ENCODE measurements at regions of chr12 and their contacts with region 1.

Region 1: DNA sequence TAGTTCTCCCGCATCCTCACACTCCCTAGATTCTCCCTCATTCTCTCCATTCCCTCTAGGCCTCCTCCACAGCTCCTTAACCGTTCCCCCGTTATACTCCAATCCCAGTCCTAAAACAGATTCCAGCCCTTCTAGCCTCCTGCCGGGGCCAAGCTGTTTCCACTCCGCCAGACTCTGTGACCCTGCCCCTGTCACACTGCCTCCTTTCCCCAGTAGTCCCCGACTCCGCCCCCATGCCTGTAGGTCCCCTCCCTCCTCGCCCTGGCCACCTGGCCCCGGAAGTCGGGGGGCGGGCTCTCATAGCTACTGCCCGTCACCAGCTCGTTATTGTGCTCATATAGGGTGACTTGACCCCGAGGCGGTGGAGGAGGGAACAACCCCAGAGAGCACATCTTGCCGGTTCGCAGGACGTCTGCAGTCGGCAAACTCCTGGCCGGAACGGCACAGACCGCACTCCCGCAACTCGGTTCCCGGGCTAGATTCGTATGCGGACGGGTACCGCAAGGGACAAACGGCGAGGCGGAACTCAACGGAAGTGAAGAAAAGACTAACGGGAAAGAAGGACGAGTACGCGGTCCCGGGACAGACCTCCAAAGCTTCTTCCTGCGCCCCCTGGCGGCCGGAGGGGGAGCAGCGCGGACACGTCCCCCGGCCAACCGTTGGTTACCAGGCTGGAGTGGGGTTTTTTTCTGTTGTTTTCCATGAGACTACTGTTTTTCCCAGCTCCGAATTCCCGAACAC is at the start of gene AAAS:
- DNase-seq: peak; percentile 97
- H3K4me3 ChIP-seq: peak within 1 kb of the TSS; percentile 71
- H3K27ac ChIP-seq: peak within 1 kb of the TSS; percentile 91
- H3K4me1 ChIP-seq: peaks cover 18% of the 10 kb centered on the region
- H3K27me3 ChIP-seq: no peaks in the 10 kb centered on the region
- CTCF ChIP-seq: peak; percentile 100
- total RNA-seq, gene AAAS: 94.2 and 104 TPM in 2 replicates

Region 2: DNA sequence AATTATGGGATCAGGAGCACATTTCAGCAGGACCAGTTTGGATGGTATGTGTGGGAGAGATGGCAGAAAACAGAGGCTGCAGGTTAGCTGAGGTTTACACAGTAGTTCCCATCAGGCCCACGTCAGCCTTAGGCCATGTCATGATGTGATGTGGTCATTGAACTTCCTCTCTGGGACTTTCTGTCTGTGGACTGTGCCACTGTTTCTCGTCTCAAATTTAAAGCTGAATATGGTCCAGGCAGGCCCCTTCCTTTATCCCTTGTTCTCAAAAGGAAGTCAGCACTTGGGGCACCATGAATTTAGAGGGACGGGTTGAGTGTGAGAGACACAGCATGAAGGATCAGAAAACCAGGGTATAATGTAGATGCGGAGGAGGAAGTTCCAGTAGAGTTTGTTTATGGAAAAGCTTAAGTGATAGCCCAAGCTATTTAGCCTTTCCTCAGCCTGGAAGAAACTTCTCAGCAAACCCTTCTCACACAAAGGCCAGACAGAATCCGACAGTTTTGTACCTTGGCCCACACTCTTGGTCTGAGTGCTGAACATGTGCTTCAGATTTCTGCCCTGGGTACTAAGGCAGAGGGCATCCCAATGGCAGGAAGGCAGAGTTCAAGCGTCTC is 227.4 kb before region 1 on chr12:
- CTCF ChIA-PET with region 1: no interaction called
- POLR2A ChIA-PET with region 1: no interaction called
- intact Hi-C with region 1: no loop called
- DNase-seq: no peak
- H3K4me3 ChIP-seq: no peak overlapping the region
- H3K27ac ChIP-seq: no peak overlapping the region
- H3K4me1 ChIP-seq: peaks cover 19% of the 10 kb centered on the region
- H3K27me3 ChIP-seq: no peaks in the 10 kb centered on the region
- CTCF ChIP-seq: no peak

Region 3: DNA sequence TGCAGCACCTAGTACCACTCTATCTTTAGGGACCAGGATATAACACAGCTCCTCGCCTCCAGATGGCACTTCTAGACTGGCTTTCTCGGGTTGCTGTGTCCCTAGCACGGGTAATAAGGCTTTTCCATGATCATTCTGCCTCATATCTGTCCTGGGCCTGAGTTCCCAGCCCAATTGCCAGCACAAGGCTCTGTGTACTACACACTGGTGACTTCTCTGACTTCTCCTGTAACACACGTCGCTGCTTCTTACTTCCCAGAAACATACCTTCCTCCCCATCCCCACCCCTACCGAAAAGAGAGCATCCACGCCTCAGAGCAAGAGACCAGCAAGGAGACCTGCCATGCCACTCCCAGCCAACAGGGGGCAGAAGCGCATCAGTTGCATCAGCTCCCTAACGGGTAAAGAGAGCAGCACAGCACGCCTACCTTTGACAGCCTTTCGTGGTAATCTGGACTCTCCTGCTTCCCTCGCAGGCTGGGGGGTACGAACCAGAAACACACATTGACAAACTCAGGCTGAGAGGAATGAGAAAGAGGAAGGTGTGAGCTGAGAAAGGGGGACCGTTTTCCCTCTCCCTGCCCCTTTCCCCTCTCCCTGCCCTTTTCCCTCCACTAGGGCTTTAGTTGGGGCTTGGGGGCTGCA is 161.9 kb before region 1 on chr12:
- CTCF ChIA-PET with region 1: interaction called, 10 read pairs
- POLR2A ChIA-PET with region 1: no interaction called
- intact Hi-C with region 1: no loop called
- DNase-seq: peak; percentile 89
- H3K4me3 ChIP-seq: no peak overlapping the region
- H3K27ac ChIP-seq: peak overlapping the region; percentile 43
- H3K4me1 ChIP-seq: peaks cover 3% of the 10 kb centered on the region
- H3K27me3 ChIP-seq: no peaks in the 10 kb centered on the region
- CTCF ChIP-seq: peak; percentile 99

Region 4: DNA sequence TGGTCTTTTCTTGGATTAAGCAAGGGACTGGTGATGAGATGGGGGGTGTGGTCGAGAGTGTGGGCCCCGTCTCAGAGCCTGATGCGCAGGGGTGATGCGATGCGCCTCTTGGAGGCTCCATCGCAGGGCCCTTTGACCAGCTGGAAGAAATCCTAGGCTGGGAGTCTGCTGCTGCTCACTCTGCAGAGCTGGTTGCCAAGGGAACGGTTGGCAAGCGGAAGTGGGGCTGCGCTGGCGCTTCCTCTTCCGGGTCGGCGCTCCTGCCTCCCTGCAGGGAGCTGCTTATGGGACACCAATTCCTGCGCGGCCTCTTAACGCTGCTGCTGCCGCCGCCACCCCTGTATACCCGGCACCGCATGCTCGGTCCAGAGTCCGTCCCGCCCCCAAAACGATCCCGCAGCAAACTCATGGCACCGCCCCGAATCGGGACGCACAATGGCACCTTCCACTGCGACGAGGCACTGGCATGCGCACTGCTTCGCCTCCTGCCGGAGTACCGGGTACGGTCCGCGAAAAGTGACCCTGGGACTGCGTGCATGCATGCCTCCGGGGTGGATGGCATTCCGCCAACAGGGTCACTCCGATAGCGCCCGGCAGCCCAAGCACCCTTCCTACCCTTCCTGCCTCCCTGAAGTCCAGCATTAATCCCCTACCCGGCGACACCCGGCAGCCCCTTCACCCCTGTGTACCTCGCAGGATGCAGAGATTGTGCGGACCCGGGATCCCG is 21.6 kb before region 1 on chr12 and contains the start of gene MYG1:
- CTCF ChIA-PET with region 1: interaction called, 11 read pairs
- POLR2A ChIA-PET with region 1: no interaction called
- intact Hi-C with region 1: no loop called
- DNase-seq: peak; percentile 97
- H3K4me3 ChIP-seq: peak within 1 kb of the TSS; percentile 73
- H3K27ac ChIP-seq: peak within 1 kb of the TSS; percentile 78
- H3K4me1 ChIP-seq: peaks cover 13% of the 10 kb centered on the region
- H3K27me3 ChIP-seq: no peaks in the 10 kb centered on the region
- CTCF ChIP-seq: 0 out of 2 replicates have a peak, but pooled peaks have one; percentile 24
- total RNA-seq, gene MYG1: 102 and 111 TPM in 2 replicates

Region 5: DNA sequence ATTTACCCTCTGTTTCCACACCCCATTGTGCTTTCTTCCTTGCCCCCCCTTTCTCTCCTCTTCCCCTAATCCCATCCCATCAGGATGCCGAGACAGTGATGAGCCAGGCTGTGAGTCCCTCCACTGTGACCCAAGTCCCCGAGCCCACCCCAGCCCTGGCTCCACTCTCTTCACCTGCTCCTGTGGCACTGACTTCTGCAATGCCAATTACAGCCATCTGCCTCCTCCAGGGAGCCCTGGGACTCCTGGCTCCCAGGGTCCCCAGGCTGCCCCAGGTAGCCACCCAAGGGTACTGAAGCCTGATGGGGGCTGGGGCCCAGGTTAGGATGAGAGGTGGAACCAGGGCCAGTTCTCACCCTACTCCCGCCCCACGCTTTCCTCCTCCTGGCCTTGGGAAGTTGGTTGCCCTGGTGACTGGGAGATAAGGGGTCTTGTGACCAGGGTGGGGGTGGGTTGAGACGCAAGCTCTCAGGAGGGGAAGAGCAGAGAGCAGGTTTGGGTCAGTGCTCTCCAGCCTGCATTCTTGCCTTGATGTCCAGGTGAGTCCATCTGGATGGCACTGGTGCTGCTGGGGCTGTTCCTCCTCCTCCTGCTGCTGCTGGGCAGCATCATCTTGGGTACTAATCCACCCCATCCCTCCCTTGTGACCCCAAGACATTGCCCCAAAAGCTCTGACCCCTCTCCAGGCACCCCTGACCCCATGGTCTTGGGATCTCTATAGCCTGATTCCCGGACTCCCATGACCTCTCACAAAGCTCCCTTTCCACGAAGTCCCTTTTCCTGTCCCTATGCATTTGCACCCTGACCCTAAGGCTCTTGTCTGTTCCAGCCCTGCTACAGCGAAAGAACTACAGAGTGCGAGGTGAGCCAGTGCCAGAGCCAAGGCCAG is 103.6 kb after region 1 on chr12:
- CTCF ChIA-PET with region 1: interaction called, 11 read pairs
- POLR2A ChIA-PET with region 1: no interaction called
- intact Hi-C with region 1: loop called (anchors 1 kb)
- DNase-seq: no peak
- H3K4me3 ChIP-seq: no peak overlapping the region
- H3K27ac ChIP-seq: no peak overlapping the region
- H3K4me1 ChIP-seq: peaks cover 10% of the 10 kb centered on the region
- H3K27me3 ChIP-seq: no peaks in the 10 kb centered on the region
- CTCF ChIP-seq: no peak

Region 6: GRCh38 chr12:53508534-53509199 is 187.4 kb after region 1 on chr12:
- CTCF ChIA-PET with region 1: interaction called, 9 read pairs
- POLR2A ChIA-PET with region 1: interaction called, 6 read pairs
- intact Hi-C with region 1: loop called (anchors 1 kb)
- DNase-seq: peak; percentile 89
- H3K4me3 ChIP-seq: no peak overlapping the region
- H3K27ac ChIP-seq: no peak overlapping the region
- H3K4me1 ChIP-seq: peaks cover 3% of the 10 kb centered on the region
- H3K27me3 ChIP-seq: no peaks in the 10 kb centered on the region
- CTCF ChIP-seq: peak; percentile 96